AG04449 (cell line): ENCODE measurements at regions of chr3 and their contacts with region 1.

Region 1: GRCh38 chr3:87298111-87298718 is 21.8 kb upstream of the POU1F1 start:
- DNase-seq: no peak
- H3K4me3 ChIP-seq: no peak overlapping the region
- CTCF ChIP-seq: peak; percentile 38

Region 2: DNA sequence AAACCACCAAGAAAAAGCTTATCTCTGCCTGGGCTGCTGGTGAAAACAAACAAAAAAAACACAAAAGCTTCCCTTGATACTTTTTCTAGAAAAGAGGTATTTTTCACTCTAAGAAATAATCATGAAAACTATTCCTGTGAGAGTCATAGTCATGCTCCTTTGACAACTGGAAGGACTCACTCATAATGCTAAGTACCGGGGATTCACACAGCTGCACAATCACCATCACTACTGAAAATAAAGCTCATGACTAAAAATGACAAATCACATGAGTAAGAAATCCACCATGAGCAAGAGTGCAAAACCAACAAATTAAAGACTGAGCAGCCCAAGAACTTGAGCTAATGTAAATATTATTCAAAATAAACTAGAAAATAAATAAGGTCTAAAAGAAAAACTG is 11.2 kb before region 1 on chr3:
- CTCF ChIA-PET with region 1: interaction called, 42 read pairs
- POLR2A ChIA-PET with region 1: no interaction called
- DNase-seq: peak; percentile 23
- H3K4me3 ChIP-seq: no peak overlapping the region
- CTCF ChIP-seq: no peak

Region 3: DNA sequence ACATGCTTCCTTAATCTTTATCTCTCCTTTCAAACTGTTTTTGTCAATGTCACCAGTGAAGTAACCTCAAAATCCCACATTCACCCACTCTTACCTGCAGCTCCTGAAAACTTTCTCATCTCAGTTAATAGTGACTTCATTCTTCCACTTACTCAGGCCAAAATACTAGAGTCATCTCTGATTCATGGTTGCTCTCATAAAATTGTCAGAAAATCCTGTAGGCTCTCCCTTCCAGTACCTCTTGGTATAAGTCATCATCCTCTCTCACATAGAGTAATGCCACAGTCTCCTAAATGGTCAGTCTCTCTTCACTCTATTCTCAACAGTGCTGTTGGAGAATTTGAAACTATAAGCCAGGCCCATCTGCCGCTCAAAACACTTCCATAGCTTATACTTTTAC is 13.1 kb after region 1 on chr3:
- CTCF ChIA-PET with region 1: interaction called, 32 read pairs
- POLR2A ChIA-PET with region 1: no interaction called
- DNase-seq: no peak
- H3K4me3 ChIP-seq: no peak overlapping the region
- CTCF ChIP-seq: no peak

Region 4: DNA sequence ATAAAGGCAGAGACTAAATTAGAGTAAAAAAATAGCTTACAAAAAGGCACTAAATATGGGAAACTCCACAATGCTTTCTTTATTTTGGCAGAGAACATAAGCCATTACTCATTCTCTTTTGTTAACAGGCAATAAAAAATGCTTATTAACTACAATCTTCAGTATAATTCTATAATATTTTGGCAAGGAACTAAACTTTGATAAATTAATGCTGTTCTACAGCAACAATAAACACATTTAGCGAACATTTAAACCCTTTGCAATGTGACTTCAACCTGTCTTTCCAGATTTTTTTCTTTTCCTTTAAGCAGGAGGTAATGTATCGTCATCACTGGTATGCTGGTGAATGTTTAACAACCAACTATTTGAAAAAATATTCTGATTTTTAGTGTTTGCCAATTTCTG is 20.4 kb after region 1 on chr3:
- CTCF ChIA-PET with region 1: interaction called, 32 read pairs
- POLR2A ChIA-PET with region 1: no interaction called
- DNase-seq: no peak
- H3K4me3 ChIP-seq: no peak overlapping the region
- CTCF ChIP-seq: no peak

Region 5: DNA sequence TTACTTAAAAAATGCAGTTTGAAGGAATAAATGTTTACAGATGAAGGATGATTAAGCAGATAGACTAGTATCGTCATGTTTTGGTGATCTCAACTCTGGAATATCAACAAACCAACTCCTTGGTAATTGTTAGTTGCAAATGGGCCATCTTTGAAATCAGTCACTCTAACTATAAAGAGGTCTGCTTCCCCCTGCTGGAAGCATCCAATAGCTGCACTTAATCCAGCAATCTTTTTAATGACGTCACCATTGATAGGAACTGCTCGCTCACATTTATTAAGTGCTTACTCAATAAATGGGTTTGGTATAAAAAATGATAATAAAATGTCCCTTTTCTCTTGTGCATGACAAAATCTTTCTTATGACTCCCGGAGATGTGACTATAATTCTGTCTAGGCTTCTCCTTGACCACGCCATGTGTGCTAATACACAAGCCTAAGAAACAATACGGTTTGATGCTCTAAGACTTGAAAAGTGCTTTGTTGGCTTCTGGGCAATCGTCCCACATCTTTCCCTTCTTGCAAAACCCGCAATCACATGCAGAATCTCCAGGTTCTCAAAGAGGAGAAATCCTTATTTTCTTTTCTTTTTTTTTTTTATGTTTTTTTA is 205.8 kb after region 1 on chr3:
- CTCF ChIA-PET with region 1: interaction called, 91 read pairs
- POLR2A ChIA-PET with region 1: no interaction called
- DNase-seq: peak; percentile 50
- H3K4me3 ChIP-seq: no peak overlapping the region
- CTCF ChIP-seq: peak; percentile 59

Region 6: DNA sequence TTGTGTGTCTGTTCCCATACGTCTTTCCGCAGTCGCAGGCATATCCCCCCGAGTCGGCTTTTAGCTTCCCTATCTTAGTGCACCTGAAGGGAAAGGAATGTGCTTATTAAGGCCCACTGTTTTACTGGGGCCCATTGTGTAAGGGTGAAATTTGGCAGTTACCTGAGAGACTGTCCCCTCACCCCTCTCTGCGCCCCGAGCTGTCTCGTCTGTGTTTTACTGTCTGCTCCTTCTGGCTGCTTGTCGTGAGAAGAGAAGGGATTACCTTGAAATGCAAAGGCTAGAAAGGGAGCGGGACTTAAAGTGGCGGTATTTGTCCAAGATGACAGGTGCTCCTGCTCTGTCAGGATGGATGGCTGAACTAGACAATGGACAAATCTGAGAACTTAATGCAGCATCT is 211.2 kb after region 1 on chr3:
- CTCF ChIA-PET with region 1: interaction called, 91 read pairs
- POLR2A ChIA-PET with region 1: no interaction called
- DNase-seq: no peak
- H3K4me3 ChIP-seq: no peak overlapping the region
- CTCF ChIP-seq: no peak

Region 7: DNA sequence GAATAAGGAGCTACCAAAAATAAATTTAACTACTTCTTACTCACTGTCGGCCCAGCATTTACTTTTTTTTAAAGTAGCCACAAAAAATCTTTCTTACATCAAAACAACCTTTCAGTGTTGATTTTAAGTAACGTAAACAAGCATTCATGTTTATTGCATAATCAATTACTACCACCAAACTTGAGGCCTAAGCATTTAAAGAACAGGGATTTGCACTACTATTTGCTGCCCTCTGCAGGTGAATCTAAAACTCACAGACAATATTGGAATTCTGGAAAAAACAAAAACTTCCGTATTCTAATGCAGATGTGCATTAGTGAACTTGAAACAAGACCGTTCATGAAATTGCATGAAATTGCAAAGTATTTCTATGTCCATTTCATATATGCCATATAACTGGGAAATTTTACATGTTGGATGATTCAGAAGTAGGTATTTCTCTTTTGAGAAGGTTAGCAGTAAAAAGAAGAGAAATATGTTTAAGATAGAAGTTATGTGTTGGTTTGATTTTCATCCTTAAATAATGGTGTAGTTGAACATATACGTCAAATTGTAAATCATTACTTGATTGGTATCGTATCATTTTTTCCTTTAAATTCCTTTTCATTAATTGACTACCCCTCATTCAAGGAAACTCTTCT is 705.0 kb after region 1 on chr3:
- CTCF ChIA-PET with region 1: interaction called, 25 read pairs
- POLR2A ChIA-PET with region 1: no interaction called
- DNase-seq: no peak
- H3K4me3 ChIP-seq: no peak overlapping the region
- CTCF ChIP-seq: peak; percentile 46